Left colon (tissue), 2 donors: ENCODE measurements at regions of chr3 and their contacts with region 1.

Region 1: GRCh38 chr3:102887431-102887830 is 452.6 kb downstream of the ZPLD1 start:
- DNase-seq: no peak
- ATAC-seq: no peak

Region 2: GRCh38 chr3:103025880-103026279 is 138.4 kb after region 1 on chr3:
- intact Hi-C with region 1: loop called in 1 of 2 experiments (anchors 5 kb)
- DNase-seq: no peak
- ATAC-seq: no peak

Region 3: GRCh38 chr3:103184772-103185171 is 297.3 kb after region 1 on chr3:
- intact Hi-C with region 1: no loop called
- DNase-seq: no peak
- ATAC-seq: no peak